ENCODE measurements at regions of chr17 and their contacts with region 1.

Region 1: DNA sequence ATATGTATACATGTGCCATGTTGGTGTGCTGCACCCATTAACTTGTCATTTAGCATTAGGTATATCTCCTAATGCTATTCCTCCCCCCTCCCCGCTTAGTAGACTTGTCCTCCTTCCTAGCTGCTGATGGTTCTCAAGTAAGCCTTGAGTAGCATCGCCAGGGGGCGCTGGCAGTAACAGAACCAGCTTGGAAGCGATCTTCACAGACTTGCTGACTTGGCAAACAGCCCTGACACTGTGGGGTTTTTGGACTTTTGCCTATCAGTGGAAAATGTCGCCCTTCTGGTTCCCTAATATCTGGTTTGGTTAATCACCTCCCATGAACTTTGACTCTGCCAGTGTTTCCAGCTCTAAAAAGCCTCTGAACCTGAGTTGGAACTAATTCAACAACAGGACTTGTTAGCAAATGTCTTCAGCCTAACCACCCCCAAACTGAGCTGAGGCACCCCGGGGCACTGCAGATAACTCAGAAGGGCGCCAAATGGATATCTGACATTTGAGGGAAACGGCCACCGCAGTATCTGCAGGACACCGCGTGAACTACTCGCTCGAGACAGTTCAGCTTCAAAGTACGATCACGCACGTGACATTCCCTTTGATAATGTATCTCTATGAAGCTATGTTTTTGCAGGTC is 15.4 kb upstream of the SPATA32 start:
- DNase-seq: peak; percentile 94
- ATAC-seq: peak; percentile 58 to 85 (median 74)
- H3K4me3 ChIP-seq: peak overlapping the region in 2 of 10 donors; percentile 2 to 5
- H3K27ac ChIP-seq: peak overlapping the region; percentile 27 to 90 (median 80)
- H3K4me1 ChIP-seq: peaks cover 12 to 53% (median 36%) of the 10 kb centered on the region in 9 donors
- H3K27me3 ChIP-seq: no peaks in the 10 kb centered on the region
- CTCF ChIP-seq: peak; percentile 69 to 88 (median 80)

Region 2: GRCh38 chr17:45197555-45198334 is 79.6 kb before region 1 on chr17:
- intact Hi-C with region 1: no loop called
- DNase-seq: peak; percentile 91 to 96
- ATAC-seq: peak; percentile 95 to 100 (median 98)
- H3K4me3 ChIP-seq: peak overlapping the region in 1 of 10 donors; percentile 1
- H3K27ac ChIP-seq: peak overlapping the region in 7 of 10 donors; percentile 36 to 65 (median 48)
- H3K4me1 ChIP-seq: peaks cover 0 to 23% (median 10%) of the 10 kb centered on the region in 9 donors
- H3K27me3 ChIP-seq: no peaks in the 10 kb centered on the region
- CTCF ChIP-seq: peak; percentile 98 to 100 (median 99)

Region 3: GRCh38 chr17:45228763-45229539 is 48.4 kb before region 1 on chr17:
- intact Hi-C with region 1: loop called in 5 of 10 experiments (anchors 5 to 10 kb)
- DNase-seq: peak; percentile 85 to 87
- ATAC-seq: peak; percentile 61 to 78 (median 74)
- H3K4me3 ChIP-seq: peak overlapping the region in 4 of 10 donors; percentile 5 to 70 (median 6)
- H3K27ac ChIP-seq: peak overlapping the region; percentile 22 to 91 (median 80)
- H3K4me1 ChIP-seq: peaks cover 28 to 84% (median 69%) of the 10 kb centered on the region in 9 donors
- H3K27me3 ChIP-seq: no peaks in the 10 kb centered on the region
- CTCF ChIP-seq: no peak

Region 4: DNA sequence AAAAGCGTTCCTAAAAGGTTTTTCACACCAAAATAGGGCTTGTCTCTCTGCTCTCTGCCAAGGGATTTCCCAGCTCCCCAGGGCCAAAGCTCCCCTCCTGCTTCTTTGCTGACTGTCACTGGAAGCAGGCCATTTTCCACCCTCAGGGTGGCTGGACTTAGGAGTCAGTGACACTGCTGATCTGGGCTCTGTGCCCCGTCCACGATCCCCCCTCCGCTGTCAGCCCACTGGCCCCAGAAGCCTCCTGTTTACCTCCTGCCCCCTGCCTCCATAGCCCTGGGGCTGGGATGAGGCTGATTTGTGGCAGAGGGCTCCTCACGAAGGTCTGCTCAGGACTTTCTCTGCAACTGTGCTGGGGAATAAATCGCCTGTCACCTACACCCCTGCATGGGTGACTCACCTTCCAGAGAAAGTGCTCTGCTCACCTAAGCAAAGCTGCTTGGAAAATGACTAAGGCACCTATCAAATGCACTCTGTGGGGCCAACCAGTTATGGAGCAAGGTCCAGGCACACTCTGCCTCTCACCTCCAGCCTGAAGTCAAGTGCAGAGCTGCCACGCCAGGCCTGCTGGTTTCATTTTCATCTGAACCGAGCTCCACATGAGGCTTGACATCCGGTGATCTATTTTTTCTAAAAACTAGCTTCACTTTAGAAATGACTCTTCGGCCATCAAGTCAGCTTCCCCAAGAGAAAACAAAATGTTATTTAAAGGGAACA is 34.6 kb after region 1 on chr17:
- intact Hi-C with region 1: loop called in 9 of 10 experiments (anchors 2 to 5 kb)
- DNase-seq: peak; percentile 55 to 66
- ATAC-seq: peak in 7 of 8 donors; percentile 7 to 63 (median 41)
- H3K4me3 ChIP-seq: peak overlapping the region in 9 of 10 donors; percentile 1 to 41 (median 16)
- H3K27ac ChIP-seq: peak overlapping the region; percentile 70 to 98 (median 96)
- H3K4me1 ChIP-seq: peaks cover 33 to 93% (median 88%) of the 10 kb centered on the region in 9 donors
- H3K27me3 ChIP-seq: no peaks in the 10 kb centered on the region
- CTCF ChIP-seq: no peak

Region 5: GRCh38 chr17:45371414-45372327 is 94.3 kb after region 1 on chr17:
- intact Hi-C with region 1: loop called in 1 of 10 experiments (anchors 5 kb)
- DNase-seq: peak; percentile 73 to 80
- ATAC-seq: peak; percentile 91 to 96 (median 94)
- H3K4me3 ChIP-seq: peak overlapping the region in 9 of 10 donors; percentile 1 to 46 (median 37)
- H3K27ac ChIP-seq: peak overlapping the region; percentile 57 to 91 (median 81)
- H3K4me1 ChIP-seq: peaks cover 6 to 44% (median 29%) of the 10 kb centered on the region in 9 donors
- H3K27me3 ChIP-seq: peaks cover 0 to 11% (median 0%) of the 10 kb centered on the region in 7 donors
- CTCF ChIP-seq: peak in 2 of 9 donors; percentile 14 to 22

Region 6: GRCh38 chr17:45385331-45385997 is 108.1 kb after region 1 on chr17:
- intact Hi-C with region 1: loop called in 9 of 10 experiments (anchors 1 to 5 kb)
- DNase-seq: peak; percentile 90 to 91
- ATAC-seq: peak; percentile 91 to 97 (median 95)
- H3K4me3 ChIP-seq: no peak overlapping the region
- H3K27ac ChIP-seq: peak overlapping the region in 1 of 10 donors; percentile 49
- H3K4me1 ChIP-seq: peaks cover 0 to 47% (median 20%) of the 10 kb centered on the region in 9 donors
- H3K27me3 ChIP-seq: peaks cover 0 to 8% (median 0%) of the 10 kb centered on the region in 7 donors
- CTCF ChIP-seq: peak; percentile 96 to 100 (median 98)